Mammary epithelial cell (primary cell): ENCODE measurements at regions of chr15 and their contacts with region 1.

Region 1: GRCh38 chr15:30922480-30923311 is 19.0 kb downstream of the FAN1 start:
- DNase-seq: peak; percentile 69
- H3K4me3 ChIP-seq: no peak overlapping the region
- H3K27ac ChIP-seq: peak overlapping the region; percentile 15
- H3K4me1 ChIP-seq: peaks cover 17% of the 10 kb centered on the region
- H3K27me3 ChIP-seq: no peaks in the 10 kb centered on the region
- CTCF ChIP-seq: no peak

Region 2: DNA sequence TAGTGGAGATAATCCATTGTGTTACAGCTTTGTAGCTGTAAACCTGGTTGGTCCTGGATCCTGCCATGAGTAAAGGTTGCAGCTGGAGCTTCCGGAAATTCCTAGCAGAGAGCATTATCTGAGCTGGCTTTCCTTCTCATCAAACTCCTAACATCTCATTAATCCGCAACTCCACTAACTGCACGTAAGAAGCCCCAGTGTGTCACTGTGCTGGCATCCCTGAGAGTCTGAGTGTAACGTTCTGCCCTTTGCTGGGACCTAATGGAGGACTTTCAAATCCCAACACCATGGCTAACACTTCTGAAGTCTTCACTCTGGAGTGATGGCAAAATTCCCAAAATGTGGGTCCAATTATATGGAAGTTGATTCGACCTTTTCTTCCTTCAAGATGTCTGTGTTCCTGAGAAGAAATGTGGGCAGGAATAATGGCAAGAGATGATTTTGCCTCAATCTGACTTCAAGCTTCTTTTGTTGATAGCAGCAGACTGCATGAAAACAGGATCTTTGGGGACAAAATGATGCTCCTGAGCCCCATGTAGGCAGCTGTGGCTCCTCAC is 188.5 kb after region 1 on chr15:
- CTCF ChIA-PET with region 1: no interaction called
- dilution Hi-C with region 1: no loop called
- in situ Hi-C with region 1: loop called in 1 of 2 experiments (anchors 10 kb)
- intact Hi-C with region 1: no loop called
- DNase-seq: no peak
- H3K4me3 ChIP-seq: no peak overlapping the region
- H3K27ac ChIP-seq: no peak overlapping the region
- H3K4me1 ChIP-seq: no peaks in the 10 kb centered on the region
- H3K27me3 ChIP-seq: no peaks in the 10 kb centered on the region
- CTCF ChIP-seq: no peak